ENCODE measurements at regions of chr4 and their contacts with region 1.

Region 1: GRCh38 chr4:37802068-37802666 is 24.3 kb upstream of the PGM2 start:
- DNase-seq: no peak
- ATAC-seq: no peak
- H3K4me3 Mint-ChIP-seq: no peak overlapping the region
- H3K27ac Mint-ChIP-seq: no peak overlapping the region
- H3K4me1 Mint-ChIP-seq: no peaks in the 10 kb centered on the region
- H3K27me3 Mint-ChIP-seq: peaks cover 5% of the 10 kb centered on the region

Region 2: DNA sequence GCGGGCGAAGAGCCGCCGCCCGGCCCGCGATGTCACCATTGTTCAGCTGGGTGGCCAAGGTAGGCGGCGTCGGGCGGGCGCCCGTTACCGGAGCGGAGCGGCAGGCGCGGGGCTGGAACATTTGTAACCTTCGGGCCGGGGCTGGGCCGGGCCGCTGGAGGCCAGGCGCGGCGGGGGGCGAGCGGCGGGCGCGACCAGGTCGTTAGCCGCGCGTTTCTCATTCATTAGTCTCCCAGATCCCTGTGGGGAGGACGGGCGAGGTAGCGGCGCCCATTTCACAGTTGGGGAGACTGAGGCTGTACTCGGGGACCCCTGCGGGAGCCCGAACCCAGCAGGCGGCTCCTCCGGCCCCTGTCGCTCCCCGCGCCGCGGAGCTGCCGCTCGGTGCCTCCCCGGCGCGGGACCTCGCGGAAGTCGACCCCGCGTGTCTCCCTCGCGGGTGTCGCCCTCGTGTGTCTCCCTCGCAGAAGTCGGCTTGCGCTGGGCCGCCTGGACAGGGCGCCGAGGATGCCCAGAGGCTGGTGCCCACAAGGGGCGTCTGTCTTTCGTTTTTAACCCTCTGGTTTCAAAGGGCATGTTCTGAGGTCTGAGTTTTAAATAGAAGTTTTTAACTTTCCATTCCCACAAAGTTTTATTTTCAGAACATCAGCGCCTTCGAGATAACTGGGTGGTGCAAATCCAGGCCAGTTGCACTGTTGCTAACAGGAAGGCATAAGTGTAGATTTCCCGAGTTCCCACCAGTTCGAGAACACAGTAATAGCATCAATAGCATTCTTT is 175.5 kb after region 1 on chr4:
- CTCF ChIA-PET with region 1: interaction called, 12 read pairs
- POLR2A ChIA-PET with region 1: no interaction called
- DNase-seq: peak; percentile 81
- ATAC-seq: peak; percentile 88
- H3K4me3 Mint-ChIP-seq: peak overlapping the region; percentile 83
- H3K27ac Mint-ChIP-seq: peak overlapping the region; percentile 79
- H3K4me1 Mint-ChIP-seq: peaks cover 39% of the 10 kb centered on the region
- H3K27me3 Mint-ChIP-seq: no peaks in the 10 kb centered on the region